ENCODE measurements at regions of chr6 and their contacts with region 1.

Region 1: GRCh38 chr6:39088331-39088730 is 26.7 kb downstream of the SAYSD1 start:
- DNase-seq: peak in 1 of 2 donors; percentile 74
- ATAC-seq: peak; percentile 35
- H3K4me3 ChIP-seq: no peak overlapping the region
- H3K27ac ChIP-seq: no peak overlapping the region
- H3K4me1 ChIP-seq: no peaks in the 10 kb centered on the region
- H3K27me3 ChIP-seq: no peaks in the 10 kb centered on the region

Region 2: GRCh38 chr6:38968702-38969149 is 119.6 kb before region 1 on chr6:
- intact Hi-C with region 1: no loop called
- DNase-seq: no peak
- ATAC-seq: no peak
- H3K4me3 ChIP-seq: no peak overlapping the region
- H3K27ac ChIP-seq: no peak overlapping the region
- H3K4me1 ChIP-seq: no peaks in the 10 kb centered on the region
- H3K27me3 ChIP-seq: peaks cover 0 to 2% of the 10 kb centered on the region in 2 donors

Region 3: GRCh38 chr6:39309942-39310531 is 221.7 kb after region 1 on chr6:
- intact Hi-C with region 1: loop called in 1 of 2 experiments (anchors 2 kb)
- DNase-seq: peak; percentile 78 to 89
- ATAC-seq: peak; percentile 78
- H3K4me3 ChIP-seq: no peak overlapping the region
- H3K27ac ChIP-seq: no peak overlapping the region
- H3K4me1 ChIP-seq: no peaks in the 10 kb centered on the region
- H3K27me3 ChIP-seq: no peaks in the 10 kb centered on the region